Left cardiac atrium (tissue), 4 donors: ENCODE measurements at regions of chr15 and their contacts with region 1.

Region 1: DNA sequence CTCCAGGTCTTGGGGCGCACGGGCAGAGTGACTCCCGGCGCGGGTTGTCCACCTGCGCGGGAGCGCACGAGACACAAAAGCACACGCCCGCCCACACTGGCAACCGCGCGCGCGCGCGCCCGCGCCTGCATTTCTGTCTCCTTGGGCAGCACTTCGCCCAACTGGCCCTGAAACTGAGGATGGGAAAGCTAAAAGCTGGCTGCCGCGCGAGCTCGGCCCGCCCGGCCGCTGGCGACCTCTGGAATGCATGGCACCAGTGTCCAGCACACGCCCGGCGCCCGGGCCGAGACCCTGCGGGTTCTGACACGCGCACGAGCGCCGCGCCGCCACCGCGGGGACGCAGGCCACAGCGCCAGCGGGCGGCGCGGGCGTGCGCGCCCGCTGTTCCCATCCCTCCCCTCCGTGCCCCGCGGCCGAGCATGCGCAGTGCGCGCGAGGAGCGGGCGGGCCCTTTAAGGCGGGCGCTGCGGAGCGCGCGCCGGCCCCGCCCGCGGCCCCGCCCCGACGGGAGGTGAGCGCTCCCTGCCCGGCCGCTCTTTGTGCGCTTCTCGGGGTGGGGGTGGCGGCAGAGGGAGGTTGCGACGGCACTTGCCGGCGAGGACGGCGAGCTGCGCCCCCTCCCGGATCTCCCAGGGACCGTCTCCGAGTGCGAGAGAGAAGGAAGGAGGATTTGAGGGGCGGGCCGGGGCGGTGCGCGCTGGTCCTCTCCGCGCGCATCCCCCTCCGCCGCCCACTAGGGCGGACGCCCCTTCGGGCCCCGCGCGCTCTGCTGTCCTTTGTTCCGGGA is 1.0 kb upstream of the MEX3B start:
- DNase-seq: peak; percentile 91
- ATAC-seq: peak; percentile 86

Region 2: DNA sequence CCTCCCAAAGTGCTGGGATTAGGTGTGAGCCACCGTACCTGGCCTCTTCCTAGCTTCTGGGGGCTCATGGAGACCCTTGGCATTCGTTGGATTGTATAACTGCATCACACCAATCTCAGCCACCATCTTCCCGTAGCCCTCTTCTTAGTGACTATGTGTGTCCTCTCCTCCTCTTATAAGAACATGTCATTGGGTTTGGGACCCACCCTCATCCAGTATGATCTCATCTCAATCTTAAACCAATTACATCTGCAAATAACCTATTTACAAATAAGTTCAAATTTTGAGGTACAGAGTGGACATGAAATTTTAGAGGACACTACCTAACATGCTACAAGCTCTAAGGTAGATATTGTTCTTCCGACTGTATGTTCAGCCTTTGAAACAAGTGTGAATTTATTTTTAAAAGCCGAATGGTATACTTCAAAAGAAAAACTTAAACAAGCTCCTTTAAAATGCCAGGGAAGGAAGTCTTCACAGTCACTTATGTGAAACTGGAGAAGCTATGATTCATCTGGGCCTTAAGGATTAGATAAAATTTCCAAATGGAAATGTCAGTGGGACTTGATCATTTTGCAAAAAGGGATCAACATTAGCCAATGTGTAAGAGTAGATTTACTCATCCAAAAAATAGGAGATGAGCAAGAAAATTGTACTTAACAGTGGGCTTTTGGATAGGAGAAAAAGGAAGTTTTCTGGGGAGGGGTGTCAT is 226.8 kb before region 1 on chr15:
- intact Hi-C with region 1: no loop called
- DNase-seq: no peak
- ATAC-seq: no peak

Region 3: DNA sequence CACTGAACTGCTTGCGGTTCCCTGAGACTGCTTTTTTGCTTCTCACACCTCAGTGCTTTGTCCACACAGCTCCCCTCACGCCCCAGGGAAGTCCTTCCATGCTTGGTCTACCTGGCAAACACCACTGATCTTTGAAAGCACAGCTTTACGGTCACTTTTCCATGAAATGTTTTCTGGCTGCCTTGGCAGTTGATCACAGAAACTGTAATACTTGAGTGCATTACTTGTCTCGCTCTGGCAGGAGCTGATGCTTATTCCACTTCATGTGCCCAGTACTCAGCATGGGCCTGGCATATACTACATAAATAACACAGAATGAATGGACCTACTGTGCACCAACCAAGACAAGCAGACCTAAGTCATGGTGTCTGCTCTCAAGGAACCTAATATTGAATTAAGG is 122.1 kb before region 1 on chr15:
- intact Hi-C with region 1: loop called in 1 of 2 experiments (anchors 10 kb)
- DNase-seq: no peak
- ATAC-seq: peak in 1 of 2 donors; percentile 27

Region 4: DNA sequence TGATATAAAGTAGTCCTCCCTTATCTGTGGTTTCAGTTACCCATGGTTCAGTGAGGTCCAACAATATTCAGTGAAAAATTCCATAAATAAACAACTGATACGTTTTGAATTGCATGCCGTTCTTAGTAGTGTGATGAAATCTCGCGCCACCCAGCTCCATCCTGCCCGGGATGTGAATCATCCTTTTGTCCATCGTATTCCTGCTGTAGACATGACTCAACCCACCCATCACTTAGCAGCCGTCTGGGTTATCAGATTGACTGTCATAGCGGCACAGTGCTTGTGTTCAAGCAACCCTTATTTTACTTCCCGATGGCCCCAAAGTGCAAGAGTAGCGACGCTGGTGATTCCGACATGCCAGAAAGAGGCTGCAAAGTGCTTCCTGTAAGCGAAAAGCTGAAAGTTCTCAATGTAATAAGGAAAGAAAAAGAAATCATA is 46.9 kb after region 1 on chr15:
- intact Hi-C with region 1: no loop called
- DNase-seq: no peak
- ATAC-seq: no peak